Right ventricle myocardium inferior (tissue), 1 donor: ENCODE measurements at regions of chr13 and their contacts with region 1.

Region 1: GRCh38 chr13:47508527-47509228 is 492.4 kb downstream of the SUCLA2 start:
- DNase-seq: no peak
- ATAC-seq: peak; percentile 90

Region 2: DNA sequence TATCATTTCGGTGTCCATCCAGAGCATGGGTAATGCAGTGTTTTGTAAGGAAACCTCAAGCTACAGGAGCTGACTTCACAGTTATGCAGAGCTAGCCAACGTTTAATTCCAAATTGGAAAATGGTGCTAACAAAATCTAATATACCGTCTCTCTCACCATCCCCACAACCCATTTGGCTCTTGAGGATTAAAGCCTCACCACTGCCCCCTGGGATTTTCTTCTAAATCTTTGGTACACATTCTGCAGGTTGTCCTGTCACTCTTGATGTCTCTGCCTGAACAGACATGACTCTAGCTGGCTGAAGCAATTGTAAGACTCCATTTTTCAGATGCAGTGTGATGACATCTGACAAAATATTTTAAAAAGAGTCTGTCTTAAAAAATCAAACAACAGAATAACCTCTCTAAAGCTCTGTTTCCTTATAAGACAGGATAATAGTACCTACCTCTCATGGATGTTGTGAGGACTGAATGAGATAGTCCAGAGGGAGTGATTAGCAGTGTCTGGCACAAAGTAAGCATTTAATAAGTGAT is 40.6 kb after region 1 on chr13:
- intact Hi-C with region 1: loop called (anchors 5 kb)
- DNase-seq: no peak
- ATAC-seq: no peak